ENCODE measurements at regions of chr13 and their contacts with region 1.

Region 1: DNA sequence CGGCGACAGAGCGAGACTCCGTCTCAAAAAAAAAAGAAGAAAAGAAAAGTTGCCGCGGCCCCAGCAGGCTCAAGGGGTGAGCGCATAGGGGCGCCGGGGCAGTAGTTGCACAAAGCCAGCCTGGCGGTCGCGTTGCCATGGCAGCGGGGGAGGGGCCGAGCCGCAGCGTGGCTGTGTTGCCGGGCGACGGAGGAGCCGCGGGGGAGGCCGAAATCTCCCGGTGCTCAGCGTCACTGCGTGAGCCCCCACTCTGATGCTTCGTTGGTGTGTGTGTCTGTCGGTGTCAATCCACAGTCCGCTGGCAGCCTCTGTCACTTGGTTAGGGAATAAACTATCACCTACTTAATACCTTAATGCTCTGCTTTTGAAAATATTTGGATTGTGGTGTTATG is 82.9 kb upstream of the C1QTNF9B start:
- DNase-seq: peak; percentile 70 to 92 (median 79)
- ATAC-seq: peak; percentile 91
- H3K4me3 ChIP-seq: peak overlapping the region; percentile 54
- H3K4me3 Mint-ChIP-seq: peak overlapping the region; percentile 87 to 99 (median 90)
- H3K27ac ChIP-seq: no peak overlapping the region
- H3K27ac Mint-ChIP-seq: peak overlapping the region in 7 of 9 donors; percentile 18 to 81 (median 71)
- H3K4me1 ChIP-seq: peaks cover 7 to 8% of the 10 kb centered on the region in 2 donors
- H3K4me1 Mint-ChIP-seq: peaks cover 6 to 18% (median 15%) of the 10 kb centered on the region in 7 donors
- H3K27me3 ChIP-seq: peaks cover 6 to 7% of the 10 kb centered on the region in 2 donors
- H3K27me3 Mint-ChIP-seq: peaks cover 21 to 63% (median 26%) of the 10 kb centered on the region in 5 donors

Region 2: DNA sequence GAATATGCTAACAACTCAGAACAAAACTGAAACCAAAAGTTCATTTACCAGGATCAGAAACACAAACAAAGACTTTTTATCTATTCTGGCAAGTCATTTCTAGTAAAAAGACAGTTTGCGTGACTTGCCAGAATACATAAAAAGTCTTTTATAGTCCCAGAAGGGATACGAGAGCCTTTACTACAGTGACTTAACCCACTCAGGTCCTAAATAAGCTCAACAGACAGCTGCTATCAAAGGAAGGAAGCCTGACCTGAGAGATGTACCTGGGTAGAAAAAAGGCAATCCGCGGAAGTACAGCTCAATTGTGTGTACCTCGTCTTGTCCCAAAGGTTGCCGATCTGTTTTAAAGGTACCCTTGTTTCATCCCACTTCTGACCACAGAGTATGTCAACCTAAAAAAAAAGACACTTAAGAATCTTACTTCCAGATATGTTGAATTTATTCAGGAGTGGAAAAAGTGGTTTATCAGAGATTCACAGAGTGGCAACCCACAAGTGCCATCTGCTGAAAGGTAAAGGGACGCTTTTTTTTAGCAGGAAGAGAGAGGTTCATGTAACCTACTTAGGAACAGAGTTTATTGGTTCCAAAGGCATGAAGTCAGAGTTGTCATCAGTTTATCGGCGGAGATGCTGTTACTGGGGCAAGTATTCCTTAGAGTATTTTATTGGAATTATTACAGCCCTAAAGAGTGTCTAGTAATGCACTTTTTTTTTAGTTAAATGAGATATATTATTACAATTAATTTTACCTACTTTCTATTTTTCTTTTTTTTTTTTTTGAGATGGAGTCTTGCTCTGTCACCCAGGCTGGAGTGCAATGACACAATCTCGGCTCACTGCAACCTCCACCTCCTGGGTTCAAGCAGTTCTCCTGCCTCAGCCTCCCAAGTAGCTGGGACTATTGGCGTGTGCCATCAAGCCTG is 13.2 kb before region 1 on chr13:
- CTCF ChIA-PET with region 1: no interaction called
- POLR2A ChIA-PET with region 1: no interaction called
- intact Hi-C with region 1: loop called (anchors 1 kb)
- DNase-seq: peak in 6 of 9 donors; percentile 19 to 58 (median 48)
- ATAC-seq: peak; percentile 79
- H3K4me3 ChIP-seq: peak overlapping the region; percentile 57
- H3K4me3 Mint-ChIP-seq: peak overlapping the region; percentile 65 to 88 (median 84)
- H3K27ac ChIP-seq: peak overlapping the region; percentile 52
- H3K27ac Mint-ChIP-seq: peak overlapping the region; percentile 18 to 93 (median 88)
- H3K4me1 ChIP-seq: peaks cover 6% of the 10 kb centered on the region in 2 donors
- H3K4me1 Mint-ChIP-seq: peaks cover 6 to 39% (median 18%) of the 10 kb centered on the region in 7 donors
- H3K27me3 ChIP-seq: no peaks in the 10 kb centered on the region
- H3K27me3 Mint-ChIP-seq: no peaks in the 10 kb centered on the region

Region 3: DNA sequence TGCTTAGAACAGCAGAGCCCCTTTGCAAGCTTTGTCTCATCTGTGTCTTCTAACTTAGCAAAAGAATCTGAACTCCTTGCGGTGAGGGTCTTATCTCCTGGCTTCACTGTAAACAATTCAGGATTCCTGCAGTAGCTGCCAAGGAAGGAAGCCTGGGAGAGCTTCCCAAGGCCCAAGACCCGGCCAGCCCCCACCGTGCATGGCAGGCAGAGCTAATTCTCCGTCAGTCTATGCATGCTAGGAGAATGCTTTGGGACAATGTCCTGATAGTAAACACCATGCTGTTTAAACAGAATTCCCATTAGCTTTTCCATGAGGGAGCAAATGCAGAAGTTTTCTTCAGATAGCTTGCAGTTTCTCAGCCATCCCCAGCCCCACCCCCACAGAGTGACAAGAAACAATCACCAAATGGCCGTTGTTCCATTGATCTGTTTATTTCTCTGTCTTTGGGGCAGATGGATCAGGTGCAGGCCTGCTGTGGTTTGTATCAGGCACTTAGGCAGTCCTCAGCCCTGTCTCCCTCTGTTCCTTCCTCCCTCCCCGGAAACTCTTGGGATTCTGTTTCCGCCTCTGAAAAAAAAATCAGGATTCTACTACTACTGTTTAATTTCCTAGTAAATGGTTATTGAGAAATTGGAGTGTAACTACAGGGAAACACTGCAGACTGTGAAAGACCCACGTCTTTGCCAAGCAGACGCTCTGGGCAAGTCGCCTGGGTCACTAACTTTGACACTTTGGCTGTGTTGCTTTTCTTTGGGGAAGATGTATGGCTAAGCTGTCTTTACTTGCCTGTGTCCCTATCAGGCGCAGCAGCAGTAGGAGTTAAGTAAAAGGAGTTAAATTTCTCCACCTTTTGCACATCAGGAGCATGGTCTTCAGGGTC is 139.7 kb after region 1 on chr13:
- CTCF ChIA-PET with region 1: no interaction called
- POLR2A ChIA-PET with region 1: no interaction called
- intact Hi-C with region 1: no loop called
- DNase-seq: no peak
- ATAC-seq: no peak
- H3K4me3 ChIP-seq: no peak overlapping the region
- H3K4me3 Mint-ChIP-seq: no peak overlapping the region
- H3K27ac ChIP-seq: no peak overlapping the region
- H3K27ac Mint-ChIP-seq: no peak overlapping the region
- H3K4me1 ChIP-seq: no peaks in the 10 kb centered on the region
- H3K4me1 Mint-ChIP-seq: peaks cover 0 to 33% (median 8%) of the 10 kb centered on the region in 7 donors
- H3K27me3 ChIP-seq: no peaks in the 10 kb centered on the region
- H3K27me3 Mint-ChIP-seq: peaks cover 4 to 33% (median 6%) of the 10 kb centered on the region in 5 donors

Region 4: GRCh38 chr13:24254146-24254841 is 274.1 kb after region 1 on chr13:
- CTCF ChIA-PET with region 1: no interaction called
- POLR2A ChIA-PET with region 1: no interaction called
- intact Hi-C with region 1: no loop called
- DNase-seq: peak in 7 of 9 donors; percentile 59 to 80 (median 68)
- ATAC-seq: peak; percentile 76
- H3K4me3 ChIP-seq: peak overlapping the region; percentile 82
- H3K4me3 Mint-ChIP-seq: peak overlapping the region; percentile 86 to 96 (median 92)
- H3K27ac ChIP-seq: peak overlapping the region; percentile 90
- H3K27ac Mint-ChIP-seq: peak overlapping the region; percentile 86 to 99 (median 95)
- H3K4me1 ChIP-seq: peaks cover 58 to 75% of the 10 kb centered on the region in 2 donors
- H3K4me1 Mint-ChIP-seq: peaks cover 44 to 96% (median 91%) of the 10 kb centered on the region in 7 donors
- H3K27me3 ChIP-seq: no peaks in the 10 kb centered on the region
- H3K27me3 Mint-ChIP-seq: no peaks in the 10 kb centered on the region

Measured in naive thymus-derived CD4-positive, alpha-beta T cell (primary cell).